ENCODE measurements at regions of chr1 and their contacts with region 1.

Region 1: DNA sequence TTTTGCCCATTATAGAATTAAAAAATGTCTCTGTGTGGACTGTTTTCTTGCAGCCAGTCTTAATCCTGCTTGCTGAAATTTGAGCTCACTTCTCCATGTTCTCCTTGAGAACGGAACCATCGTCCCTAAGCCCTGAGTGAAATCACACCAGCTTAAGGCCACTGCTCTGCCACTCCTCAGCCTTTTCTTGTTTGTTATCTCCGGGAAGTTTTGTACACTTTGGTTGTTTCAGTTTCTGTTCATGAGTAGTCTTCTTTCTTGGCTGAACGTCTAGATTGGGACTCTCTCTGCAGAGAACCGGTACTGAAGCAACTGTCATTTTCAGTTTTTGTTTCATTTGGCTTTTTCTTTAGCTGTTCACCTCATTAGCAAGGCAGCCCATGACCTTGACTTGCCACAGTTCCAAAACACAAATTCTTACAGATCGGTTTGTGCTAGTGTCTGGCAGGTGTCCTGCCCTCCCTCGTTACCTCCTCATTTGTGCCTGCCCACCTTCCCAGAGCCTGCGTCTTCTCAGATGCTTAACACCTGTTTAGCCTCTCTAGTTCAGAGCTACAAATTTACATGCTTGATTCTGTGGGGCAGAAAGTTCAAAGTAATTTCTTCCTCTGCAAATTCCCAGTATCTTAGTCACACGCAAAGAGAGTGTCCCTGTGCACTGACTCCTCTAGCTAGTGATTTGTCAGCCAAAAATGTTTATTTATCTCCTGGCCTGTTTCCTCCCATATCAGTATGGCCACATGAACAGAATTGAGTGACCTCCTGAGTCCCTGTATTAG is 12.4 kb downstream of the PSEN2 start:
- DNase-seq: peak; percentile 74
- ATAC-seq: peak; percentile 92
- H3K4me3 ChIP-seq: peak overlapping the region in 4 of 5 experiments; percentile 16 to 58 (median 31)
- H3K4me3 Mint-ChIP-seq: peak overlapping the region; percentile 71
- H3K27ac ChIP-seq: peak overlapping the region; percentile 62 to 81
- H3K27ac Mint-ChIP-seq: peak overlapping the region; percentile 84
- H3K4me1 ChIP-seq: peaks cover 44 to 52% of the 10 kb centered on the region in 2 donors
- H3K4me1 Mint-ChIP-seq: peaks cover 46% of the 10 kb centered on the region
- H3K27me3 ChIP-seq: no peaks in the 10 kb centered on the region
- H3K27me3 Mint-ChIP-seq: no peaks in the 10 kb centered on the region
- CTCF ChIP-seq: no peak

Region 2: GRCh38 chr1:226870401-226871279 is 12.2 kb before region 1 on chr1 and contains the start of gene PSEN2:
- CTCF ChIA-PET with region 1: no interaction called
- POLR2A ChIA-PET with region 1: interaction called, 3 read pairs
- intact Hi-C with region 1: loop called (anchors 1 kb)
- DNase-seq: peak; percentile 76
- ATAC-seq: peak; percentile 96
- H3K4me3 ChIP-seq: peak within 1 kb of the TSS in 4 of 5 experiments; percentile 50 to 85 (median 72)
- H3K4me3 Mint-ChIP-seq: peak within 1 kb of the TSS; percentile 88
- H3K27ac ChIP-seq: peak within 1 kb of the TSS in 1 of 2 donors; percentile 67
- H3K27ac Mint-ChIP-seq: peak within 1 kb of the TSS; percentile 67
- H3K4me1 ChIP-seq: peaks cover 10 to 16% of the 10 kb centered on the region in 2 donors
- H3K4me1 Mint-ChIP-seq: peaks cover 20% of the 10 kb centered on the region
- H3K27me3 ChIP-seq: peaks cover 0 to 3% (median 0%) of the 10 kb centered on the region in 4 experiments
- H3K27me3 Mint-ChIP-seq: no peaks in the 10 kb centered on the region
- CTCF ChIP-seq: no peak
- total RNA-seq, gene PSEN2: 26.0 and 29.9 TPM in 2 replicates

Region 3: GRCh38 chr1:226920446-226920894 is 37.6 kb after region 1 on chr1:
- CTCF ChIA-PET with region 1: no interaction called
- POLR2A ChIA-PET with region 1: no interaction called
- intact Hi-C with region 1: no loop called
- DNase-seq: no peak
- ATAC-seq: no peak
- H3K4me3 ChIP-seq: no peak overlapping the region
- H3K4me3 Mint-ChIP-seq: no peak overlapping the region
- H3K27ac ChIP-seq: no peak overlapping the region
- H3K27ac Mint-ChIP-seq: no peak overlapping the region
- H3K4me1 ChIP-seq: no peaks in the 10 kb centered on the region
- H3K4me1 Mint-ChIP-seq: no peaks in the 10 kb centered on the region
- H3K27me3 ChIP-seq: peaks cover 0 to 5% (median 0%) of the 10 kb centered on the region in 4 experiments
- H3K27me3 Mint-ChIP-seq: no peaks in the 10 kb centered on the region
- CTCF ChIP-seq: no peak

Measured in B cell (primary cell).